ENCODE measurements at regions of chr9 and their contacts with region 1.

Region 1: GRCh38 chr9:131567910-131568309 is 22.6 kb downstream of the PRRT1B start:
- DNase-seq: no peak
- ATAC-seq: no peak
- H3K4me3 ChIP-seq: no peak overlapping the region
- H3K27ac ChIP-seq: no peak overlapping the region
- H3K4me1 ChIP-seq: no peaks in the 10 kb centered on the region
- H3K27me3 ChIP-seq: no peaks in the 10 kb centered on the region
- CTCF ChIP-seq: no peak

Region 2: DNA sequence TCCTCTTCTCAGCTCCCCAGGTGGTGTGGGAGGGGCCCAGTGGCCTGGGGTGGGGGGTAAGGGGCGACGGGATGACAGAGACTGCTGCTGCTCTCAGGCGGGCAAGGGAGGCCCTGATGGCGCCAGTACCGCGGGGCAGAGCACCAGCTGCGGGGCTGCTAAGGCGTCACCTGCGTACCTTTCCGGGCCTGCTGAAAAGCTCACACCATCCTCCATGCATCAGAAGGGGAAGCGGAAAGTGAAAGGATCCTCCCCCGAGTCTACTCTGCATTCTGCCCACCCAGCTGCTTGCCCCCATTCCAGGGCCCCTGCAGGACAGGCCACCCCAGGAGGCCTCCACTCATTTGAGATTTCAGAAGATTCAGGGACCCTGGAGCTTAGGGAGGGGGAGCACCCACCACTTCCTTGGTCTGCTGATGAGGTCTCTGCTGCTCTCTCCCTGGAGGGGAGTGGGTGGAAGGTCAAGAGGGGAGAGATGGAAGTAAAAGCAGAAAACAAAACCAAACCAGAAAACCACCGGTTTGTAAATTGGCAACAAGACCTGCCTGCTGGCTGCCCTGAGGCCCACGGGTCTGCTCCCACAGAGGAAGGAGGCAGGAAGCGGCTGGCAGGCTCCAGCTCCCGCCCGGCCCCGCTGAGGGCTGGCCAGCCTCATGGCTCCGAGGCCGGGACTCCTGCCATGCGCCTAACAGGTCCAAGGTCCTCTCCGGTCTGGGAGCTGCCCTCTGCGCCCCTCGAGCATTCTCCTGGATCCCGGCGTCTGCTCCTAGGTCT is 11.0 kb after region 1 on chr9:
- CTCF ChIA-PET with region 1: interaction called, 11 read pairs
- POLR2A ChIA-PET with region 1: no interaction called
- in situ Hi-C with region 1: no loop called
- intact Hi-C with region 1: no loop called
- DNase-seq: no peak
- ATAC-seq: no peak
- H3K4me3 ChIP-seq: no peak overlapping the region
- H3K27ac ChIP-seq: no peak overlapping the region
- H3K4me1 ChIP-seq: no peaks in the 10 kb centered on the region
- H3K27me3 ChIP-seq: no peaks in the 10 kb centered on the region
- CTCF ChIP-seq: no peak

Measured in Panc1 (cell line).